ENCODE measurements at regions of chr11 and their contacts with region 1.

Region 1: GRCh38 chr11:35058669-35059434 is 80.1 kb upstream of the CD44 start:
- DNase-seq: peak; percentile 59
- H3K4me3 ChIP-seq: peak overlapping the region; percentile 35
- H3K27ac ChIP-seq: peak overlapping the region; percentile 40
- H3K4me1 ChIP-seq: peaks cover 21% of the 10 kb centered on the region
- CTCF ChIP-seq: no peak

Region 2: DNA sequence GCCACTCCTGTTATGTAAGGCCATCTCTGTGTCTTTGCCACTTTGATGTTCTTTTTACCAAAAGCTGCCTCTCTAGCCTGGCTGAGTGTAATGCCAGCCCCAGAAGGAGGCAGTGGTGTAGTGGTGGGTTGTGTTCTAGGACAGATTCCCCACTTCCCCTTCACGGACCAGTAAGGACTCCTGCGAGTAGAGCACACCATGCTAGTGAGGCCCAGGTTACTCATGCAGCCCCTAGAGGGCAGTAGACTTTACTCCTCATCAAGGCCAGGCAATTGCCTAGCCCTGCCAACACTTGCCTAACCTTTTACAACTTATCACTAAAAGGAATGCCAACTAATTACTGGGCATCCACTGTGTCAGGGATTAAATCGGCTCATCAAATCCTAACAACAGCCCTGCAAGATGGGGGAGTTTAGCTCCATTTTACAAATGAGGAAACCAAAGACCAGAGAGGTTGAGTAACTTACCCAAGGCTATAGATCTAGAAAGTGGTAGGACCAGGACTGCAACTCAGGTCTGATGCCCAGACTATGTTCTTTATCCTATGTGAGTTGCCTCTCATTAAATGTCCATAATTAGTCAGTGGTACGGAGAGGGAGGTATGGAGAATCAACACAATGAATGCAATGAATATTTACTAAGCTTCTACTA is 218.0 kb before region 1 on chr11:
- CTCF ChIA-PET with region 1: no interaction called
- POLR2A ChIA-PET with region 1: no interaction called
- intact Hi-C with region 1: no loop called
- DNase-seq: peak; percentile 67
- H3K4me3 ChIP-seq: no peak overlapping the region
- H3K27ac ChIP-seq: no peak overlapping the region
- H3K4me1 ChIP-seq: no peaks in the 10 kb centered on the region
- CTCF ChIP-seq: peak; percentile 84

Region 3: GRCh38 chr11:35040221-35040942 is 18.5 kb before region 1 on chr11:
- CTCF ChIA-PET with region 1: interaction called, 3 read pairs
- POLR2A ChIA-PET with region 1: interaction called, 20 read pairs
- intact Hi-C with region 1: no loop called
- DNase-seq: no peak
- H3K4me3 ChIP-seq: no peak overlapping the region
- H3K27ac ChIP-seq: no peak overlapping the region
- H3K4me1 ChIP-seq: peaks cover 6% of the 10 kb centered on the region
- CTCF ChIP-seq: no peak

Region 4: DNA sequence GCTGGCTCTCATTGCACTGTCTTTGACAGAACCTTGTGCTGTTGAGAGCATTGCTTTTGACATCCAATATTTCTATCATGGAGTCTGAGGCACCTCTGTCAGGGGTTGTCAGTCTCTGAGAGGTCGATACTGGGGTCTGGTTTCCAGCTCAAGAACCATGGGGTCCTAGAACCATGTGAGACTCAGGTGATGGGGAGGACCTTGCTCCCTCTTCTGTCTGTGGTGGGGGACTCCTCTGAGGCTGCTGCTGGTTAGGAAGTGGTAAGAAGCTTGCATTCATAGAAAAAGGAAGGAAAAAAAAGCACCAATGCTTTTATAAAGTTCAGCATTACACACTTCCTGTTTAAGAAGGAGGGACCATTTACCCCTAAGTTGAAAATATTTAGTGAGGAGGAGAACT is 11.7 kb before region 1 on chr11:
- CTCF ChIA-PET with region 1: interaction called, 15 read pairs
- POLR2A ChIA-PET with region 1: interaction called, 20 read pairs
- intact Hi-C with region 1: no loop called
- DNase-seq: peak; percentile 50
- H3K4me3 ChIP-seq: no peak overlapping the region
- H3K27ac ChIP-seq: no peak overlapping the region
- H3K4me1 ChIP-seq: peaks cover 10% of the 10 kb centered on the region
- CTCF ChIP-seq: no peak

Region 5: GRCh38 chr11:35077709-35078469 is 19.0 kb after region 1 on chr11:
- CTCF ChIA-PET with region 1: interaction called, 3 read pairs
- POLR2A ChIA-PET with region 1: interaction called, 6 read pairs
- intact Hi-C with region 1: loop called (anchors 2 kb)
- DNase-seq: peak; percentile 85
- H3K4me3 ChIP-seq: peak overlapping the region; percentile 35
- H3K27ac ChIP-seq: peak overlapping the region; percentile 89
- H3K4me1 ChIP-seq: peaks cover 50% of the 10 kb centered on the region
- CTCF ChIP-seq: no peak

Measured in OCI-LY7 (cell line).